HepG2 (cell line): ENCODE measurements at regions of chr15 and their contacts with region 1.

Region 1: GRCh38 chr15:92992720-92993119 is 92.6 kb downstream of the CHD2 start:
- DNase-seq: no peak
- ATAC-seq: peak; percentile 24; the same call in 2 of the 3 replicates
- H3K4me3 ChIP-seq: no peak overlapping the region
- H3K27ac ChIP-seq: no peak overlapping the region
- H3K4me1 ChIP-seq: no peaks in the 10 kb centered on the region
- H3K27me3 ChIP-seq: no peaks in the 10 kb centered on the region
- CTCF ChIP-seq: no peak
- EP300 ChIP-seq: no peak
- POLR2A ChIP-seq: no peak
- RAD21 ChIP-seq: no peak

Region 2: GRCh38 chr15:92921215-92922131 is 71.2 kb before region 1 on chr15:
- CTCF ChIA-PET with region 1: no interaction called
- POLR2A ChIA-PET with region 1: no interaction called
- in situ Hi-C with region 1: no loop called
- intact Hi-C with region 1: no loop called
- DNase-seq: no peak
- ATAC-seq: no peak
- H3K4me3 ChIP-seq: no peak overlapping the region
- H3K27ac ChIP-seq: peak overlapping the region; percentile 19
- H3K4me1 ChIP-seq: peaks cover 61% of the 10 kb centered on the region
- H3K27me3 ChIP-seq: no peaks in the 10 kb centered on the region
- CTCF ChIP-seq: no peak
- EP300 ChIP-seq: no peak
- POLR2A ChIP-seq: no peak; a peak in 1 of 4 replicates
- RAD21 ChIP-seq: no peak

Region 3: GRCh38 chr15:92949604-92950249 is 43.0 kb before region 1 on chr15:
- CTCF ChIA-PET with region 1: no interaction called
- POLR2A ChIA-PET with region 1: no interaction called
- in situ Hi-C with region 1: no loop called
- intact Hi-C with region 1: loop called (anchors 10 kb)
- DNase-seq: peak; percentile 32
- ATAC-seq: peak; percentile 73
- H3K4me3 ChIP-seq: no peak overlapping the region
- H3K27ac ChIP-seq: peak overlapping the region; percentile 87
- H3K4me1 ChIP-seq: peaks cover 22% of the 10 kb centered on the region
- H3K27me3 ChIP-seq: no peaks in the 10 kb centered on the region
- CTCF ChIP-seq: no peak
- EP300 ChIP-seq: peak in 1 of 2 experiments; percentile 52; a peak in 1 of 4 replicates
- POLR2A ChIP-seq: no peak
- RAD21 ChIP-seq: no peak

Region 4: GRCh38 chr15:92979011-92979701 is 13.6 kb before region 1 on chr15:
- CTCF ChIA-PET with region 1: no interaction called
- POLR2A ChIA-PET with region 1: no interaction called
- in situ Hi-C with region 1: no loop called
- intact Hi-C with region 1: no loop called
- DNase-seq: no peak
- ATAC-seq: no peak
- H3K4me3 ChIP-seq: no peak overlapping the region
- H3K27ac ChIP-seq: no peak overlapping the region
- H3K4me1 ChIP-seq: no peaks in the 10 kb centered on the region
- H3K27me3 ChIP-seq: no peaks in the 10 kb centered on the region
- CTCF ChIP-seq: no peak
- EP300 ChIP-seq: no peak
- POLR2A ChIP-seq: no peak
- RAD21 ChIP-seq: no peak

Region 5: DNA sequence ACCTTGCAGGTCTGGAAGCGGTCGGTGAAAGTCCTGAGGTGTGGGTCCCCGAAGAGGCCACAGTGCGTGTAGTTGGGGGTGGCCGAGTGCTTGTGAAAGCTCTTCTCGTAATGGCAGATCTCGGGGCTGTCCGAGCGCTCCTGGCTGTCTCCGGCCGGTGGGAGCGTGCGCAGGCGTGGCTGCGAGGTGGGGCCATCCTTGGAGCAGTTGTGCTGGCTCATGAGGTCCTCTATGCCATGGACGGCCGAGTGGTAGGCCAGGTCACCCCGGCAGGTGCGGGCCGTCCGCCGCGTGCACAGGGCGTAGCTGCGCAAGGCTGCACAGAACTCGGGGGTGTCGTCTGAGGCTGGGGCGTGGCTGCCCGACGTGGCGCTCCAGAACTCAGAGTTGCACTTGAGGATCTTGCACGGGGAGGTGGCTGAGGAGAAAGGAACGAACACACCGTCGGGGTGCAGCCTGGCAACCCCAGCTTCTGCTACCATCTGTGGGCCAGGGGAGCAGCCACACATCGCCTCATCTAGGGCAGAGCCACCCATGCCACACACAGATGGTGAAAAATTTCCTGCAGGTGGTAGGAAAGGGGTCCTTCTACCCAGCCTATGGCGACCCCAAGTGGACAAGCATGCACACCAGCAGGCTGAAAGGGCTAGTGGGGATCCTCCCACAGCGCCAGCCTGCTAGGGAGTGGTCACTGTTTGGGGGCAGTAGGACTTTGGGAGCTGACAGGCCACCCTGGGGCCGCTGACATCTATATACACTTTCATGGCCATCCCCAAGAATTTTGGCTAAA is 59.6 kb after region 1 on chr15:
- CTCF ChIA-PET with region 1: no interaction called
- POLR2A ChIA-PET with region 1: no interaction called
- in situ Hi-C with region 1: no loop called
- intact Hi-C with region 1: no loop called
- DNase-seq: no peak
- ATAC-seq: peak; percentile 60
- H3K4me3 ChIP-seq: no peak overlapping the region
- H3K27ac ChIP-seq: no peak overlapping the region
- H3K4me1 ChIP-seq: no peaks in the 10 kb centered on the region
- H3K27me3 ChIP-seq: peaks cover 10 to 49% of the 10 kb centered on the region in 2 experiments; a peak in 4 of 5 replicates
- CTCF ChIP-seq: peak; percentile 62
- EP300 ChIP-seq: no peak
- POLR2A ChIP-seq: no peak
- RAD21 ChIP-seq: no peak